ENCODE measurements at regions of chr13 and their contacts with region 1.

Region 1: DNA sequence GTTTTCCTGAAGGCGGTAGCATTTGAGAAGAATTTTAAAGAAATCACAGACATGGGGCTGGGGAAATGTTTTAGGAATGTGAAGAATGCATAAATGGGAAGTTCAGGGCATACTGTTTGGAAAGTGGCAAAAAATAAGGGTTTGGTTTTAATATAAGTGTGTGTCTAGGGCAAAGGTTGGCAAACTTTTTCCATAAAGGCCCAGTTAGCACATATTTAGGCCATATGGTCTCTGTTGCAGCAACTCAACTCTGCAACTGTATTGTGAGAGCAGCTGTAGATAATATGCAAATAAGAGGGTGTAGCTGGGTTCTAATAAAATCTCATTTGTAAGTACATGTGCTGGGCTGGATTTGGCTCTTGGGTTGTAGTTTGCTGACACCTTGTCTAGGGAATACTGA is 521.9 kb downstream of the DIAPH3 start:
- DNase-seq: no peak
- ATAC-seq: no peak

Region 2: DNA sequence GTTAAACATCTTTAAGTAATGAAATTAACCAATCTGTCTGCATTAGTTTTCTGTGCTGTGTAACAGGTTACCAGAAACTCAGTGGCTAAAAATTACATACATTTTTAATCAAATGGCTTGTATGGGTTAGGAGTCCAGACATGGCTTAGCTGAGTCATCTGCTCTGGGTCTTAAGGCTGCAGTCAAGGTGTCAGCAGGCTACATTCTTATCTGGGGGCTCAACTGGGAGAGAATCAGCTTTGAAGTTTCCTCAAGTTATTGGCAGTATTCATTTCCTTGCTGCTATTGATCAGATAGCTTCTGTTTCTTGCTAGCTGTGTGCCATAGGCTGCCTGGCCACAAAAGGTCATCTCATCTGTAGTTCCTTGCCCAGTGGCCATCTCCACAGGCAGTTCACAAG is 641.0 kb before region 1 on chr13:
- intact Hi-C with region 1: no loop called
- DNase-seq: no peak
- ATAC-seq: no peak

Region 3: GRCh38 chr13:59374720-59375119 is 267.1 kb before region 1 on chr13:
- intact Hi-C with region 1: no loop called
- DNase-seq: no peak
- ATAC-seq: peak in 1 of 2 donors; percentile 21

Region 4: GRCh38 chr13:59587971-59588716 is 53.7 kb before region 1 on chr13:
- intact Hi-C with region 1: no loop called
- DNase-seq: no peak
- ATAC-seq: no peak

Region 5: GRCh38 chr13:59660582-59660981 is 18.8 kb after region 1 on chr13:
- intact Hi-C with region 1: loop called in 1 of 2 experiments (anchors 1 kb)
- DNase-seq: no peak
- ATAC-seq: no peak

Region 6: GRCh38 chr13:59710991-59711701 is 69.3 kb after region 1 on chr13:
- intact Hi-C with region 1: no loop called
- DNase-seq: no peak
- ATAC-seq: no peak